Common myeloid progenitor, CD34-positive (primary cell): ENCODE measurements at regions of chr18 and their contacts with region 1.

Region 1: DNA sequence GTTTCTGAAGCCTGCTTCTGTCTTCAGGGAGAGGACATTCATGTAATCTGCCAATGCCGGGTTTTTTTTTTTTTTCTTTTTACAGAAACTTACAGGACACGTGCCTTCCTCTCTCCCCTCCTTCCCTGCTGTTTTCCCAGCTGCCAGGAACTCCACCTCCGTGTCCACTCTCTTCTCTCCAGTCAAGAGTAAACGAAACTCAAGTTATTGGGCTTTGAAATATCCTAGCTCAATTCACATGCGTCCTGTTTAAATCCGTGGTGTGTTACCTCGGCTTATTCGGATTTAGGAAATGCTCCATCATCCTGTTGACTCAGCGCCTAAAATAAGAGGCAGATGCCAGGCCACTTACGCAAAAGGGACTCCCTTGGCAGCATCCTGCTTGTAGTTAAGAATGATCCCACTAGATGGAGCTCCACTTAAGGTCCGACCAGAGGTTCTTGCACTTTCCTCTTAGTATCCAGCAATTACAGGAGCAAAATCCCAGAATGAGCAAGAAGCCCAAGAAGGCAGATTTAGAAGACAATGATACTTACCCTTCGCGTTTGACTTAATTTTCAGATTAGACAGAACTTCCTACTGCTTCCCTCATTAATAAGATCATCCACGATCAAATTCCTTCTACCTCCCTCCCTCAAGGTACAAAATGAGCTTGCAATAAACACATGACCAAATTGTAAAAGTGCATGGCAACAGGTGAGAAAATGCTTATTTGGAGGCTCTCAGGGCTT is 97.2 kb upstream of the ZCCHC2 start:
- DNase-seq: peak; percentile 93 to 96 (median 94)
- H3K4me3 ChIP-seq: peak overlapping the region in 2 of 7 experiments; percentile 51 to 53
- H3K27ac ChIP-seq: no peak overlapping the region
- H3K4me1 ChIP-seq: peaks cover 2 to 22% (median 11%) of the 10 kb centered on the region in 4 experiments
- H3K27me3 ChIP-seq: no peaks in the 10 kb centered on the region

Region 2: DNA sequence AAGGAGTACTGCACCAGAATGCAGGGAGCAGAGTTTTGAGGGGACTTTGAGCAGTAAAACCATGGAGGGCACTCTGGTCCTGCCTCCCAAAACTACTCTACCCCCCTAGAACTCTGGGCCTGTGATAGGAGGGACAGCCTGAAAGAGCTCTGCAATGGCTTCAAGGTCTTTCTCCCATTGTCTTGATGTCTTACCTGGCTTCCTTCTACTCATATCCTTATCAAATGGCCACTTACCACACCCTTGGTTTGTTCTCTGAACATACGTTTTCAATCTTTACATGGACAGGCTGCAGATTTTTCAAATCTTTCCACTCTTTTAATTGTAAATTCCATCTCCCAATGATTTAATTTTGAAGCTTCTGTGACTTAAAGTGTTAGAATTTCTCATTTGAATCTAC is 210.8 kb before region 1 on chr18:
- CTCF ChIA-PET with region 1: no interaction called
- POLR2A ChIA-PET with region 1: no interaction called
- DNase-seq: no peak
- H3K4me3 ChIP-seq: no peak overlapping the region
- H3K27ac ChIP-seq: no peak overlapping the region
- H3K4me1 ChIP-seq: no peaks in the 10 kb centered on the region
- H3K27me3 ChIP-seq: no peaks in the 10 kb centered on the region

Region 3: GRCh38 chr18:62450546-62451406 is 25.1 kb after region 1 on chr18:
- CTCF ChIA-PET with region 1: interaction called, 16 read pairs
- POLR2A ChIA-PET with region 1: no interaction called
- DNase-seq: peak; percentile 90 to 97 (median 96)
- H3K4me3 ChIP-seq: peak overlapping the region in 4 of 7 experiments; percentile 5 to 62 (median 37)
- H3K27ac ChIP-seq: peak overlapping the region in 1 of 2 experiments; percentile 69
- H3K4me1 ChIP-seq: peaks cover 9 to 32% (median 22%) of the 10 kb centered on the region in 4 experiments
- H3K27me3 ChIP-seq: no peaks in the 10 kb centered on the region

Region 4: DNA sequence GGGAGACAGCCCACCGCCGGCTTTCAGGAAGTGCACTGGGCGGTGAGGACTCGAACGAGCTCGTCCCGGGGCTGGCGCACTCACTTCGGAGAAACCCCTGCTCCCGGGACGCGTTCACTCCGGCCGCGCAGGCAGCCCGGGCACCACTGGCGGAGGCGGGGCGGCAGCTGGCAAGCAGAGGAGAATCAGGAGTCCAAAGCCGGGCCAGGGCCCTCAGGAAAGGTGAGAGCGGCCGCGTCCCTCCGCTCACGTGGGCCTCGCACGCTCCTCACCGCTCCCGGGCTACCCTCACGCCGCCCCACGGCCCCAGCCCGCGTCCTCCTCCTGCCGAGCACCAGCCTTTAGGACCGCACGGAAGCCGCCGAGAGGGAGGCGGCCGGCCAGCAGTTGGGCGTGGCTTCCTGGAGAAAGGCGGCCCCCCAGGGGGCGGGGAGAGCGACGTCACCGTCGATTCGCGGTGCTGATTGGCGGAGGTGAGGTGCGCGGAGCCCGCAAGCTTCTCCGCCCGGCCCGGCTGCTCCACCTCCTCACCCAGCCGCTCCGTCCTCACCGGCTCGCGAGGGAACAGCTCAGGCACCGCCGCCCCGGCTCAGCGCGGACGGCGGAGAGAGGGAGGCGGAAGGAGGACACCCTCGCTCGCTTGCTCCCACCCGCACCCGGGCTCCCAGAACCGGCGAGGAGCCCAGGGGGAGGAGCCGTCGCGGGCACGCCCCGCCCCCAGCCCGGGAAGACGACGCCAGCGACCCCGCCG is 97.0 kb after region 1 on chr18 and contains the start of gene ZCCHC2:
- CTCF ChIA-PET with region 1: interaction called, 10 read pairs
- POLR2A ChIA-PET with region 1: no interaction called
- DNase-seq: peak; percentile 96 to 99 (median 98)
- H3K4me3 ChIP-seq: peak within 1 kb of the TSS; percentile 88 to 95 (median 90)
- H3K27ac ChIP-seq: peak within 1 kb of the TSS; percentile 70 to 81
- H3K4me1 ChIP-seq: peaks cover 19 to 42% (median 32%) of the 10 kb centered on the region in 4 experiments
- H3K27me3 ChIP-seq: no peaks in the 10 kb centered on the region

Region 5: GRCh38 chr18:62566199-62566598 is 140.6 kb after region 1 on chr18:
- CTCF ChIA-PET with region 1: interaction called, 12 read pairs
- POLR2A ChIA-PET with region 1: no interaction called
- DNase-seq: peak; percentile 75 to 82 (median 81)
- H3K4me3 ChIP-seq: no peak overlapping the region
- H3K27ac ChIP-seq: no peak overlapping the region
- H3K4me1 ChIP-seq: no peaks in the 10 kb centered on the region
- H3K27me3 ChIP-seq: no peaks in the 10 kb centered on the region

Region 6: GRCh38 chr18:62610701-62611411 is 185.2 kb after region 1 on chr18:
- CTCF ChIA-PET with region 1: no interaction called
- POLR2A ChIA-PET with region 1: no interaction called
- DNase-seq: no peak
- H3K4me3 ChIP-seq: peak overlapping the region in 2 of 7 experiments; percentile 2 to 40
- H3K27ac ChIP-seq: no peak overlapping the region
- H3K4me1 ChIP-seq: peaks cover 0 to 8% (median 5%) of the 10 kb centered on the region in 4 experiments
- H3K27me3 ChIP-seq: peaks cover 0 to 4% (median 3%) of the 10 kb centered on the region in 5 experiments